ENCODE measurements at regions of chr1 and their contacts with region 1.

Region 1: GRCh38 chr1:201970334-201971159 is 11.9 kb upstream of the RNPEP start:
- DNase-seq: no peak
- H3K4me3 ChIP-seq: no peak overlapping the region
- CTCF ChIP-seq: no peak

Region 2: DNA sequence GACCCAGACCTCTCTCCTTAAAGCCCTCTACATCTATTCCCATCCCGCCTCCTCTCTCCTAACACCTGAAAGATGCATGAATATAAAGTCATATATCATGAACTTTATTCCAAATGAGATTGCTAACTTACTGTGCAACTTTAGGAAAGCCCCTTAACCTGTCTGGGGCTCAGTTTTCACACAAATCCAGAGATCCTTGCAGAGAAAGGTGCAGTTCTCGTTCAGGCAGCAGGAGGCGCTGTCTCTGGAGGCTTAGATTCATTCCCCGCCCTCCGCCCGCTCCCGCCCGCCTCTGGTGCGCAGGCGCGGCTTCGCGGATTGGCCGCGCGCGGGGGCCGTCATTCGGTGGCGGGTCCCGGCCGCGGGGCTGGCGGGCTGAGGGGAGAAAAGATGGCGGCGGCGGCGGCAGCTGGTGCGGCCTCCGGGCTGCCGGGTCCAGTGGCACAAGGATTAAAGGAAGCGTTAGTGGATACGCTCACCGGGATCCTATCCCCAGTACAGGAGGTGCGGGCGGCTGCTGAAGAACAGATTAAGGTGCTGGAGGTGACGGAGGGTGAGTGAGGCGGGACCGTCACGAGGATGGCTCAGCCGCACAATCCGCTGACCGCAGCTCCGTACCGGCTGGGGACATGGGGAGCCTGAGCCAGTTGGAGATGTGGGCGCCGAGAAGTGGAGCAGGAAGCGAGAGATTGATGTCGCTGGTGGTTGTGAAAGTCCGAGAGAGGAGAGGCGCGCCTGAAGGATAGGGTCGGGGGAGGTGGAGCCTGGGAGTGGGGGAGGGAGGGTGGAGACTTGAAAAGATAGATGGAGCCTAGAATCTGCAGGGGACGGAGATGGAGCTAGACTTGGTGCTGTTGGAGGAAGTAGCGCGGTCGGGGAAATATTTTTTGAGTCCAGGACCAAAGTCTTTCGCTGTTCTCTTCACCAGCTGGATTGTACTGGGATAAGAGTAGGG is 141.4 kb before region 1 on chr1 and contains the start of gene IPO9:
- CTCF ChIA-PET with region 1: interaction called, 23 read pairs
- POLR2A ChIA-PET with region 1: no interaction called
- DNase-seq: no peak
- H3K4me3 ChIP-seq: peak within 1 kb of the TSS; percentile 100
- CTCF ChIP-seq: peak; percentile 89

Region 3: GRCh38 chr1:201859424-201859823 is 111.1 kb before region 1 on chr1:
- CTCF ChIA-PET with region 1: no interaction called
- POLR2A ChIA-PET with region 1: no interaction called
- DNase-seq: no peak
- H3K4me3 ChIP-seq: no peak overlapping the region
- CTCF ChIP-seq: no peak

Region 4: DNA sequence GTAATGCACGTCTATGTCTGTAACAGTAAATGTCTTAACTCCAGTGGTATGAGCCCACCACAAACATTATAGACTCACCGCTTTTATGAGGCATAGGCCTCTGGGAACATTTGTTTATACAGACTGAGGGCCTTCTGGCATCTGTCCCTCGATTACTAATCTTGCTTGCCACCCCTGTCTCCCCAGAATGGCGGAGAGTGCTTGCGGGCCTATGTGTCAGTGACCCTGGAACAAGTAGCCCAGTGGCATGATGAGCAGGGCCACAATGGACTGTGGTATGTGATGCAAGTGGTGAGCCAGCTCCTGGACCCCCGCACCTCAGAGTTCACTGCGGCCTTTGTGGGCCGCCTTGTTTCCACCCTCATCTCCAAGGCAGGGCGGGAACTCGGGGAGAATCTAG is 100.2 kb before region 1 on chr1:
- CTCF ChIA-PET with region 1: interaction called, 244 read pairs
- POLR2A ChIA-PET with region 1: no interaction called
- DNase-seq: no peak
- H3K4me3 ChIP-seq: no peak overlapping the region
- CTCF ChIP-seq: no peak

Region 5: DNA sequence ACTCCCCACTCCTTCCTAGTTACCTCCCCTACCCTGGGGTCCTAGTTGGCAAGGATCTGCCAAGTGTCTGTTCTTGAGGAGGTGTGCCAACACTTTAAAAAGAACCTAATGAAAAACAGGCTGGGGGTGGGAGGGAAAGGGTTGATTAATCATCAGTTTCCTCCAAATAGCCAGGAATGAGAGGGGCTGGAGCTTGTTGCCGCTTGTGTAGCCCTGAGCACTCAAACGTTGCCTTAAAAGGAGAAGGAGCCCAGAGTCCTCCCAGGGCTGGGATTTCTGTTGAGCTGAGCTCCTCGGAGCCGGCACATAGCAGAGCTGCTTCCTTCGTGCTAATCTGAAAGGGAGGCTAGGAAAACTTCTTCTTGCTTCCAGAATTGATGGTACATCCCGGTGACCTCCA is 66.0 kb before region 1 on chr1:
- CTCF ChIA-PET with region 1: interaction called, 656 read pairs
- POLR2A ChIA-PET with region 1: no interaction called
- DNase-seq: peak; percentile 84
- H3K4me3 ChIP-seq: no peak overlapping the region
- CTCF ChIP-seq: no peak

Region 6: DNA sequence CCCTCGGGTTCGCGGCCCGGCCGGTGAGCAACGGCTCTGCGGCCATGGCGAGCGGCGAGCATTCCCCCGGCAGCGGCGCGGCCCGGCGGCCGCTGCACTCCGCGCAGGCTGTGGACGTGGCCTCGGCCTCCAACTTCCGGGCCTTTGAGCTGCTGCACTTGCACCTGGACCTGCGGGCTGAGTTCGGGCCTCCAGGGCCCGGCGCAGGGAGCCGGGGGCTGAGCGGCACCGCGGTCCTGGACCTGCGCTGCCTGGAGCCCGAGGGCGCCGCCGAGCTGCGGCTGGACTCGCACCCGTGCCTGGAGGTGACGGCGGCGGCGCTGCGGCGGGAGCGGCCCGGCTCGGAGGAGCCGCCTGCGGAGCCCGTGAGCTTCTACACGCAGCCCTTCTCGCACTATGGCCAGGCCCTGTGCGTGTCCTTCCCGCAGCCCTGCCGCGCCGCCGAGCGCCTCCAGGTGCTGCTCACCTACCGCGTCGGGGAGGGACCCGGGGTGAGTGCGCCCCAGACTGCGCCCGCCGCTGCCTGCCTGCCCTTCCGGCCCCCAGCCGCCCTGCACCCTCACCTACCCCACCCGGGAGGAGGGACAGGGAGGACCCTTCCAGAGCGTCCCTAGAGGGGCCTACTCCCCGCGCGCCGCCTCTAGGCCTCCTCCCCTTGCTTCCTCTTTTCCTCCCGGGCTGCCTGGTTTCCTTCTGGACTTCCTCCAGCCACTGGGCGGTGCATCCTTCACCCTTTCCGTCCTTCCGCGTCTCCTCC is 12.3 kb after region 1 on chr1 and contains the start of gene RNPEP:
- CTCF ChIA-PET with region 1: interaction called, 32 read pairs
- POLR2A ChIA-PET with region 1: no interaction called
- DNase-seq: no peak
- H3K4me3 ChIP-seq: peak within 1 kb of the TSS; percentile 76
- CTCF ChIP-seq: no peak

Region 7: DNA sequence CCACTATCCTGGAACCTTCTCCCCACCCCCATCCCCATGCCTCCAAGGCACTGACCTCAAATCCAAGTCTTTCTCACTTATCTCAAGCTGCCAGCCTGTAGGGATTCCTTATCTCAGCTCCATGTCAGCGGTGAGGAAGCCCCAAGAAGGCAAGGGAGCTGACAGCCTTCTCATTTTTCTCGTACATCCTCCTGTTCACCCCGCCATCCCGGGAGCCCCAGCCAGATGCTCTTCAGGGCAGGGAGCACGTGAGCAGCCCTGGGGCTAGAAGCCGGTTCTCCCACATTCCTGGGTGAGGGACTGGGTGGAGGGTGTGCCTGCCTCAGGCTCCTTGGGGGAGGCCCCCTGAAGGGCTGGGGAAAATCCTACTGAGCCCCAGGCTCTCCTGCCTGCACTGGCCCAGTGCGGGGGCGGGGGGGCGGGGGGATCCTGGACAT is 37.5 kb after region 1 on chr1:
- CTCF ChIA-PET with region 1: no interaction called
- POLR2A ChIA-PET with region 1: no interaction called
- DNase-seq: no peak
- H3K4me3 ChIP-seq: no peak overlapping the region
- CTCF ChIP-seq: no peak

Measured in AG04449 (cell line).